ENCODE measurements at regions of chr5 and their contacts with region 1.

Region 1: DNA sequence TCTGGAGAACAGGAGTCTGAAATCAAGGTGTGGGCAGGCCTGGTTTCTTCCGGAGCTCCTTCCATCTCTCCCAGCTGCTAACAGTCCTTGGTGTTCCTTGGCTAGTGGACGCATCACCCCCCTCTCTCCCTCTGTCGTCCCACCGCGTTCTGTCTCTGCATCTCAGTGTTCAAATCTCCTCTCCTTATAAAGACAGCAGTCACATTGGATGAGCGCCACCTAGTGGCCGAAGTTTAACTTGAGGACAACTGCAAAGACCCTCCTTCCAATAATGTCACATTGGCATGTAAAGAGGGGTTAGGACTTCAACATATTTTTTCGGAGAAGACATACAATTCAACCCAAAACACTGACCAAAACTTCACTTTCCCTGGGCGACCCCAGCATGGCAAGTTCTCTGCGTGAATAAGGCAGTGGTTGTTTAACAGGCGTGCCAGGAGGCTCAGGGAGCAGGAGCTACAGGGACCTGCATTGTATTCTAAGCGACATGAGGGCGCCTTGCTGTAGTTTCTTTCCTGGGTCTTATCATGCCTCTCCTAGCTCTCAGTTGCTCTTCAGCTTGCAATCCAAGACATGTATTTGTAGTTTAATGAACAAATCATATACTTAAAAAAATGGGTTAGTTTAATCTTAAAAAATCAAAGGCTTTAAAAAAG is 27.9 kb upstream of the BASP1 start:
- DNase-seq: no peak
- H3K4me3 ChIP-seq: no peak overlapping the region
- H3K27me3 ChIP-seq: no peaks in the 10 kb centered on the region
- CTCF ChIP-seq: peak; percentile 78

Region 2: DNA sequence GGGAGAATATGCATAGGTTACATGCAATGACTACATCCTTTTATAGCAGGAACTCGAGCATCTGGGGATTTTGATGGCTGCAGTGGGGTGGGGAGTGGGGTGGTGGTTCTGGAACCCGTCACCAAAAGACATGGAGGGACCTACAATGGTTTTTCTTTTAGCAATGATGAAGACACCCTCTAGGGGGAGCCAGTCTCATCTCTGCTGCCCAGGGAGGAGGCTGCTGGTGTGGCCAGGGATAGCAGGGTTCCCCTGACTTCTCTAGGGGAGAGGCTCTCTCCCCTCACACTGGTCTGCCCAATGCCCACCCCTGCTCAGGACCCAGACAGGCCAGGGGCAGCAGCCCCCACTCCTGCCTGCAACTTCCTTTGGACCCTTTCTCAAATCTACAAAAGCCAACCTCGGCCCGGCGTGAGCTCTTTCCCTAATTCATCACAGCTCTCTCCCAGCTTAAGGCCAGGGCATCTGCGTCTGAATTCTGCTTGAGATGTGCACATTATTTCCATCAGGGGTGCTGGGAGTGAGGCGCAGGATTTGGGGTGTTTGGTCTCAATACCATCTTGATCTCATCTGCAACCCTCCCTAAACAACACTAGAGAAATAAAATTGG is 499.2 kb before region 1 on chr5:
- CTCF ChIA-PET with region 1: interaction called, 22 read pairs
- POLR2A ChIA-PET with region 1: no interaction called
- DNase-seq: no peak
- H3K4me3 ChIP-seq: no peak overlapping the region
- H3K27me3 ChIP-seq: no peaks in the 10 kb centered on the region
- CTCF ChIP-seq: peak; percentile 84

Region 3: GRCh38 chr5:16809395-16810207 is 379.9 kb before region 1 on chr5:
- CTCF ChIA-PET with region 1: interaction called, 64 read pairs
- POLR2A ChIA-PET with region 1: interaction called, 4 read pairs
- DNase-seq: peak; percentile 74
- H3K4me3 ChIP-seq: no peak overlapping the region
- H3K27me3 ChIP-seq: no peaks in the 10 kb centered on the region
- CTCF ChIP-seq: no peak

Region 4: GRCh38 chr5:16916262-16916865 is 273.1 kb before region 1 on chr5:
- CTCF ChIA-PET with region 1: interaction called, 11 read pairs
- POLR2A ChIA-PET with region 1: no interaction called
- DNase-seq: peak; percentile 86
- H3K4me3 ChIP-seq: no peak overlapping the region
- H3K27me3 ChIP-seq: no peaks in the 10 kb centered on the region
- CTCF ChIP-seq: no peak

Region 5: GRCh38 chr5:17000291-17000939 is 189.1 kb before region 1 on chr5:
- CTCF ChIA-PET with region 1: interaction called, 10 read pairs
- POLR2A ChIA-PET with region 1: interaction called, 13 read pairs
- DNase-seq: peak; percentile 97
- H3K4me3 ChIP-seq: no peak overlapping the region
- H3K27me3 ChIP-seq: no peaks in the 10 kb centered on the region
- CTCF ChIP-seq: no peak

Region 6: GRCh38 chr5:17151686-17152085 is 37.8 kb before region 1 on chr5:
- CTCF ChIA-PET with region 1: interaction called, 16 read pairs
- POLR2A ChIA-PET with region 1: no interaction called
- DNase-seq: no peak
- H3K4me3 ChIP-seq: no peak overlapping the region
- H3K27me3 ChIP-seq: no peaks in the 10 kb centered on the region
- CTCF ChIP-seq: no peak

Region 7: GRCh38 chr5:17204133-17204489 is 14.6 kb after region 1 on chr5:
- CTCF ChIA-PET with region 1: interaction called, 10 read pairs
- POLR2A ChIA-PET with region 1: no interaction called
- DNase-seq: no peak
- H3K4me3 ChIP-seq: no peak overlapping the region
- H3K27me3 ChIP-seq: no peaks in the 10 kb centered on the region
- CTCF ChIP-seq: no peak